Upper lobe of right lung (tissue), 1 donor: ENCODE measurements at regions of chr5 and their contacts with region 1.

Region 1: DNA sequence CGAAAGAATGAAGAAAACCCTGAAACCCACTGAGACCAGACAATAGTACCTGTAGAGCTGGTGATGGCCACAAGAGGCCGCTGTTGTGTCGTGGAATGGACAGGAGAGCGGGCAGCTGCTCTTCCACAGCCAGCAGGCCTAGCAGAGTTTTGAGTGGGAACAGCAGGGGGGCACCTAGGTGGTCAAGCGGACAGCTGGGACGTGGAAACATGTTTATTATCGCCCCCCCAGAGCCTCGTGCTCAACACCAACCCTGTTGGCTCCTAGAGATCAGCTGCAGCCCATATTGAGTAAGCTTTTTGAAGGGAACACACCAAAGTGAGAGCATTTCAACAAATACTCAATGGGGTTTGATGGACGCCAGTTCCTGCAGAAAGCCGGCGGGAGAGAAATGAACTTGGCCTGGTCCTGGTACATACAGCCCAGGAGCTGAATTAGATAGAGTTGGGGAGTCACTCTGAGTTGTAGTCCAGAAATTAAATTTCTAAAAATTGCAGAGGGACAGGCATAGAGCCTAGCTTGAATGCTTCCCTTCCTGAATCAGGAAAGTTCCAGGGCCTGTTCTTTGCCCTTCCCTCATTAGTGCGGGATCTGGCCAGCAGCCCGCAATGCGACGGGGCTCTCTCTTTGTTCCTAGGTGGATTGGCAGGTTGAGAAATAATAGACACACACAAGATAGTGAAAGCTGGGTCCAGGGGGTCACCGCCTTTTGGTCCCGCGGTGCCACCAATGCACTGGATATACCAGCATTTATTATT is 33.8 kb downstream of the MFAP3 start:
- DNase-seq: peak; percentile 89
- ATAC-seq: peak; percentile 98
- H3K4me3 ChIP-seq: no peak overlapping the region
- H3K27ac ChIP-seq: no peak overlapping the region
- H3K4me1 ChIP-seq: peaks cover 4% of the 10 kb centered on the region
- H3K27me3 ChIP-seq: no peaks in the 10 kb centered on the region
- CTCF ChIP-seq: peak; percentile 95

Region 2: GRCh38 chr5:154179846-154180710 is 107.5 kb after region 1 on chr5:
- intact Hi-C with region 1: loop called (anchors 5 kb)
- DNase-seq: no peak
- ATAC-seq: peak; percentile 92
- H3K4me3 ChIP-seq: no peak overlapping the region
- H3K27ac ChIP-seq: no peak overlapping the region
- H3K4me1 ChIP-seq: no peaks in the 10 kb centered on the region
- H3K27me3 ChIP-seq: no peaks in the 10 kb centered on the region
- CTCF ChIP-seq: peak; percentile 79

Region 3: DNA sequence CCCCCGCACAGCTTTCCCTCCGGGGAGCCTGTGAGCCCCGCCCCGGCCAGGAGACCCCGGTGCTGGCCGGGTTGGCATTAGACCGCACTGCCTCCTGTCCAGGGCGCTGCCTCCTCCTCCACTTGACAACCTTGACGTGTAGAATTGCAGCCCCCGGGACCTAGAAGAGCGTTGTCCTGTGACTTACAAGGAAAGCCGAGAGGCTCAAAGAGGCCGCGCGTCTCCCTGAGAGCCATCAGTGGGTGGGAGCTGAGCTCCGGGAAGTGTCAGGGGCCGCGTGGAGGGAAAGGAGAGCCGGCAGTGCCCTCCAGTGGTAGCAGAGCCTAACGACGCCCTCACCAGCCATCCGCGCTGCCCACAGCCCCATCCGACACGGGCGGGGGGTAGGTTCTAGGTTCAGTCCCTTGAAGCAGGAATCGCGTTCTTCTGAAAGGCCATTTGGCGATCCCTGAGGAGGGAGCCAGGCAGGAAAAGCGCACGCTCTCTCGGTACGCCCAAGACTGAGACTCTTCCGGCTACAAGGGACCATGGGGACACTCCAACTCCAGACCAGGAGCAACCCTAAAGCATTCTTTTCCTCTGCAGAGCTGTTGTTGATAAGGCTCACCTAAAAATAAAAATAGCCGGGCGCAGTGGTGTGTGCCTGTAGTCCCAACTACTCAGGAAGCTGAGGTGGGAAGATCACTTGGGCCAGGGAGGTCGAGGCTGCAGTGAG is 332.6 kb after region 1 on chr5:
- intact Hi-C with region 1: loop called (anchors 5 kb)
- DNase-seq: peak; percentile 88
- ATAC-seq: peak; percentile 97
- H3K4me3 ChIP-seq: peak overlapping the region; percentile 32
- H3K27ac ChIP-seq: no peak overlapping the region
- H3K4me1 ChIP-seq: peaks cover 4% of the 10 kb centered on the region
- H3K27me3 ChIP-seq: no peaks in the 10 kb centered on the region
- CTCF ChIP-seq: peak; percentile 90